ENCODE measurements at regions of chr9 and their contacts with region 1.

Region 1: GRCh38 chr9:109469646-109470358 is 28.3 kb downstream of the PTPN3 start:
- DNase-seq: peak; percentile 74
- H3K4me3 ChIP-seq: peak overlapping the region; percentile 27 to 40; a peak in 2 of 4 replicates
- H3K27ac ChIP-seq: peak overlapping the region in 1 of 2 experiments; percentile 60; a peak in 2 of 4 replicates
- H3K4me1 ChIP-seq: peaks cover 8 to 9% of the 10 kb centered on the region in 2 experiments; a peak in 1 of 4 replicates
- H3K27me3 ChIP-seq: no peaks in the 10 kb centered on the region
- CTCF ChIP-seq: peak; percentile 96
- EP300 ChIP-seq: no peak
- RAD21 ChIP-seq: peak; percentile 96

Region 2: DNA sequence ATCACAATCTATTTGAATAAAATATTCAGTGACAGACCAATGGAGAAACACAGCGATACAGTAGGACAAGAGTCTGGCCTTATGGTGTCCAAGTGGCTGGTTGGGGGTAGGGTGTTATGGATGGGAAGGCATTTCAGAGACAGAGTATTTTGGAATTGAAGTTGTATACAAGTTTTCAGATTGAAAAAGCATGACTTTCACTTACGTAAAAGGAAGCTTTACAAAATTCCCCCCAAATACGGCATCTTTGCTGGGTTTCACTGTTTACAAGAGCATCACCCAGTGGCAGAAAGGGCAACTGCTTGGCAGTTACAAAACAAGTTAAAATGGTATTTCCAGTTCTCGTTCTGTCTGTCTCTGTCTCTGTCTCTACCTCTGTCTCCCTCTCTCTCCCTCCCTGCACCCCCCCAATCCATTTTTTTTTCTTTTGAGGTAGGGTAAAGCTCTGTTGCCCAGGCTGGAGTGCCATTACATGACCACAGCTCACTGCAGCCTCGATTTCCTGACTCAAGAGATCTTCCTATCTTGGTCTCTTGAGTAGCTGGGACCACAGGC is 57.9 kb before region 1 on chr9:
- CTCF ChIA-PET with region 1: interaction called, 13 read pairs
- POLR2A ChIA-PET with region 1: no interaction called
- DNase-seq: peak; percentile 44
- H3K4me3 ChIP-seq: no peak overlapping the region
- H3K27ac ChIP-seq: no peak overlapping the region
- H3K4me1 ChIP-seq: no peaks in the 10 kb centered on the region
- H3K27me3 ChIP-seq: no peaks in the 10 kb centered on the region
- CTCF ChIP-seq: peak; percentile 65
- EP300 ChIP-seq: no peak
- RAD21 ChIP-seq: peak; percentile 67

Region 3: DNA sequence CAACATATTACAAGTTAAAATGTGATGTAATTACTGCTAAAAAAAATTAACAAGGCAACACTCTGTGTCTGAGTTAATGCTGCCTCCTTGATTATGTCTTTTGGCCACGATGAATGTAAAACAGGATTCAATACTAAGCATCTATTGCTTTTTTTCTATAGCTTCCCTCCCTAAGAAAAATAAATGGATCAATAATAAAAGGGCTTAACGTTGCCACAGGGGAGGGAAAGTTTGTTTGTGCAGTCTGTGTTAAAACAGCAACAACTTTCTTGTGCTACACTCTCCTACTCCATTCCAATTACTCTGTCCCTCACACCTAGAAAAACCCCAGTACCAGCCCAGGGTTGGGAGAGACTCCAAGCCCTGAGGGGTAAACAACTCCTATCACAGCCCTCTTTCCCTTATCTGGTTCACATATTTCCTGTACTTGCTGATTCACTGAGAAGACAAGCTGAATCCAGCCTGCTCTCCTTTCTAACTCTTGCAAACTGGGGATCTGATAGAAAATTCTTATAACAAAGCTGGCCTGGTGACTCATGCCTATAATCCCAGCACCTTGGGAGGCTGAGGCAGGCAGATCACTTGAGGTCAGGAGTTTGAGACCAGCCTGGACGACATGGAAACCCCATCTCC is 16.5 kb before region 1 on chr9:
- CTCF ChIA-PET with region 1: interaction called, 68 read pairs
- POLR2A ChIA-PET with region 1: no interaction called
- DNase-seq: peak; percentile 64
- H3K4me3 ChIP-seq: no peak overlapping the region
- H3K27ac ChIP-seq: peak overlapping the region in 1 of 2 experiments; percentile 52; a peak in 2 of 4 replicates
- H3K4me1 ChIP-seq: peaks cover 3 to 37% of the 10 kb centered on the region in 2 experiments; a peak in 2 of 4 replicates
- H3K27me3 ChIP-seq: no peaks in the 10 kb centered on the region
- CTCF ChIP-seq: no peak
- EP300 ChIP-seq: peak; percentile 26 to 77; a peak in 3 of 4 replicates
- RAD21 ChIP-seq: no peak

Region 4: DNA sequence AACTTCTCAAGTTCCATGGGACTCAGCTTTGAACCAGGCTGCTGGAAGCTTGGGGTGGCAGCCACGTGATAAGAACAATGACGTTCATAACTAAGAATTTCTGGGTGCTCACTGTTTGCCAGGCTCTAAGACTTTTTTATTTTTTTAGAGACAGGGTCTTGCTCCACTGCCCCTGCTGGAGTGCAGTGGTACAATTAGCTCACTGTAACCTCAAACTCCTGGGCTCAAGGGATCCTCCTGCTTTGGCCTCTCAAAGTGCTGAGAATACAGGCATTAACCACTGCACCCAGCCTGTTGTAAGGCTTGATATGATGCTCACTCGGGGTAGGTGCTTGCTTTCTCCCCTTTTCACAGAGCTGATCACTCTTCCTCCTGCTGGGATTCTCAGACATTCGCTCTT is 10.4 kb before region 1 on chr9:
- CTCF ChIA-PET with region 1: interaction called, 68 read pairs
- POLR2A ChIA-PET with region 1: no interaction called
- DNase-seq: no peak
- H3K4me3 ChIP-seq: no peak overlapping the region
- H3K27ac ChIP-seq: no peak overlapping the region
- H3K4me1 ChIP-seq: no peaks in the 10 kb centered on the region; a peak in 1 of 4 replicates
- H3K27me3 ChIP-seq: no peaks in the 10 kb centered on the region
- CTCF ChIP-seq: no peak
- EP300 ChIP-seq: no peak
- RAD21 ChIP-seq: no peak

Region 5: DNA sequence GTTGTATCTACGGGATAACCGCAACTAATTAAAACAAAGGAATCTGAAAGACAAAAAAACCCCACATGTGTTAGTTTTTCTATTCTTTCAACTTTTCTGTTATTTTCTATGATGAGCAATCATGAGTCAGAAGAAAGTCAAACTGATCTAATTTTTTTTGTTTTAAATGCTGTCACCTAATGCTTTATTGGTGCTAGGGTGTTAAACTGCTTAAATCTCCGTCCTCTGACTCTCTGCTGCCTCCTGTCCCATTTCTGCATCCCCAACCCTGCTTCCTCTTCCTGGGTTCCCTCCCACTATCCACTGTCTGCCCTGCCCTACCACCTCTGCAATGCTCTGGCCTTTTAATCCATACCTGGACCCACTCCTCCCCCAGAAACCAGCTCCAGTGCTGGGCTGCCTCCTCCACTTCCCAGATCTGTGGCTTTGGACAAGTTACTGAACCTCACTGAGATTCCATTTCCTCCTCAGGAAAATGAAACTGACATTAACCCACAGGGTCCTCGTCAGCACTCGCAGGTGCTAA is 12.7 kb after region 1 on chr9:
- CTCF ChIA-PET with region 1: interaction called, 23 read pairs
- POLR2A ChIA-PET with region 1: no interaction called
- DNase-seq: no peak
- H3K4me3 ChIP-seq: no peak overlapping the region
- H3K27ac ChIP-seq: peak overlapping the region in 1 of 2 experiments; percentile 11; a peak in 1 of 4 replicates
- H3K4me1 ChIP-seq: peaks cover 5 to 9% of the 10 kb centered on the region in 2 experiments; a peak in 1 of 4 replicates
- H3K27me3 ChIP-seq: no peaks in the 10 kb centered on the region
- CTCF ChIP-seq: 0 out of 2 replicates have a peak, but pooled peaks have one; percentile 8
- EP300 ChIP-seq: no peak
- RAD21 ChIP-seq: no peak

Region 6: DNA sequence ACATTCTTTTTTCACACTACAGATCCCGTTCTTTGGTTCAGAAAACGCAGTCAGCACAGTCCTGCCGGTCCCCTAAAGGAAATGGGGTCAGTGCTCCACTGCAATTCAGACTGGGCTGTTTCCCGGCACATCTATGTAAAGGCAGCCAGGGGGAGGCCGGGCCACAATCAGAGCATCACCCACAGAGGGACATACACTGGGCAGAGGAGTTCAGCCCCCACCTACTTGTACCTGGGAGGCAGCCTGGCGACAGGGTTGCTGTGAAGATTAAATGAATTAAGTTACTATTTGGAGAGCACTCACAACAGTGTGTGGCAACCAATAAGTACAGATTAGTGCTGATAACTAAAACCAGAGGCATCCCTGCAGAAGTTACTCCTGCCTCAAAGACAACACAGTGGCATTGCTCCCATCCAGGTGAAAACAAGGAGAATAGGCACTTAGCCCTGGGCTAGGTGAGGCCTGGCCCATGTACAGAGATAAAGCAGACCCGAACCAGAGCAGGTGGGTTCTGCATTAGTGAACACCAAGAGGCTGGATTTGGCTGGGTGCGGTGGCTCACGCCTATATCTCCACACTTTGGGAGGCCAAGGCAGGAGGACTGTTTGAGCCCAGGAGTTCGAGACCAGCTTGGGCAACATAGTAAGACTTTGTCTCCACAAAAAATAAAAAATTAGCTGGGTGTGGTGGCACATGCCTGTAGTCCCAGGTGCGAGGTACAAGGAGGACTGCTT is 24.0 kb after region 1 on chr9:
- CTCF ChIA-PET with region 1: interaction called, 17 read pairs
- POLR2A ChIA-PET with region 1: no interaction called
- DNase-seq: peak; percentile 52
- H3K4me3 ChIP-seq: no peak overlapping the region
- H3K27ac ChIP-seq: no peak overlapping the region
- H3K4me1 ChIP-seq: peaks cover 0 to 9% of the 10 kb centered on the region in 2 experiments; a peak in 1 of 4 replicates
- H3K27me3 ChIP-seq: no peaks in the 10 kb centered on the region
- CTCF ChIP-seq: no peak
- EP300 ChIP-seq: peak in 1 of 2 experiments; percentile 35; a peak in 1 of 4 replicates
- RAD21 ChIP-seq: no peak

Region 7: GRCh38 chr9:109499631-109500410 is 30.0 kb after region 1 on chr9:
- CTCF ChIA-PET with region 1: interaction called, 17 read pairs
- POLR2A ChIA-PET with region 1: no interaction called
- DNase-seq: peak; percentile 81
- H3K4me3 ChIP-seq: peak overlapping the region; percentile 54 to 64
- H3K27ac ChIP-seq: no peak overlapping the region
- H3K4me1 ChIP-seq: peaks cover 0 to 13% of the 10 kb centered on the region in 2 experiments; a peak in 2 of 4 replicates
- H3K27me3 ChIP-seq: no peaks in the 10 kb centered on the region; the same call in 1 of the 2 replicates
- CTCF ChIP-seq: no peak
- EP300 ChIP-seq: no peak
- RAD21 ChIP-seq: no peak

Measured in SK-N-SH (cell line).